Left colon (tissue), 2 donors: ENCODE measurements at regions of chr19 and their contacts with region 1.

Region 1: GRCh38 chr19:42529248-42529764 is 1.0 kb upstream of the CEACAM1 start:
- DNase-seq: peak; percentile 57 to 81
- ATAC-seq: peak; percentile 76

Region 2: DNA sequence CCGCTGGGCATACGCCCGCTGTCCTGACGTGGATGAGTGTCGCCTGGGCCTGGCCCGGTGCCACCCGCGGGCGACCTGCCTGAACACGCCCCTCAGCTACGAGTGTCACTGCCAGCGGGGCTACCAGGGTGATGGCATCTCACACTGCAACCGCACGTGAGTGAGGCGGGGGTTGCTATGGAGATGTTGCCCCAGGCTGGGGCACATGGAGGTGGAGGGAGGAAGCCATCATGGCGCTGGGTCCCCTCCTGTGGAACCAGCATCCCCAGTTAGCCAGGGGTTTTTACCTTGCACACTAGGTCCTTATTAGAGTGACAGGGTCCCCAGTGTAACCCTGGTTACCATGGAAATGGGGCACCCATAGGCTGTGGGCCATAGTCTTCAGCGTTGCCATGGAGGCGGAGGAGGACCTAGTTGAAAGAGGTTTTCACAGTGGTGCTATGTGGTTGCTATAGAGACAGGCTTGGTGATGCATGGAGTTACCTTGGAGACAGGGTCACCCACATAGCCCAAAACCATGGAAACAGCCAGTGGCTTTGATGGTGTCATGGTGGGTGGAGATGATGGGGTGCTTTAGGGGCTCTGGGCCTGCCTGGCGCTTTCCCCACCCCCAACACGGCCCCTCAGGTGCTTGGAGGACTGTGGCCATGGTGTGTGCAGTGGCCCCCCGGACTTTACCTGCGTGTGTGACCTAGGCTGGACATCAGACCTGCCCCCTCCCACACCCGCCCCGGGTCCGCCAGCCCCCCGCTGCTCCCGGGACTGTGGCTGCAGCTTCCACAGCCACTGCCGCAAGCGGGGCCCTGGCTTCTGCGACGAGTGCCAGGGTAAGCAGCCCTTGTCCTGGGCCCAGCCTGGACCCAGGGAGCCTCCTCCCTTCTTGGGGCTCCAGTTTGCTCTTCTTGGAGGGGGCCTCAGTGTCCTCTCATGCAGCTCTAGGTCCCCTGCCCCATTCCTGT is 176.7 kb before region 1 on chr19:
- intact Hi-C with region 1: no loop called
- DNase-seq: no peak
- ATAC-seq: no peak

Region 3: GRCh38 chr19:42450314-42450934 is 78.9 kb before region 1 on chr19:
- intact Hi-C with region 1: loop called (anchors 2 to 5 kb)
- DNase-seq: peak; percentile 86 to 92
- ATAC-seq: peak; percentile 96

Region 4: DNA sequence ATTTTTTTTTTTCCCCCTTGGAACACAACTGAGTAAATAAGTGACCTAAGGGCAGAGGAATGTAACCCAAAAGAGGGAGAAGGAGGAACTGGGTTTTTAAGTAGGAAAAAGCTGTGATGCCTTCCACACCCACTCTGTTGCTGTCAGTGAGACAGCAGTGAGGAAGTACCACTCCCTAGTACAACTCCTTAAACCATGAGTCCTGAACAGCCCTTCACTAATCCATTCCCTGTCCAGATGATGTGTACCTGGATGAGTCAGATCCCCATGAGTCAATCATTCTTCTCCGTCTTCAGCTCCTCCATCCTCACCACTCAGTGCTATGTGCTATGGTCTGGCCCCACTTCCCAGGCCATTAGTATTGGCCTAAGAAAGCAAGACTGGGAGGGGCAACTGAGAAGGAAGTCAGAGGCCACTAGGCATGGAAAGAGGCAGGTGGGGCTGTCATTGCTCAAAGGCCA is 73.7 kb before region 1 on chr19:
- intact Hi-C with region 1: loop called (anchors 2 to 5 kb)
- DNase-seq: peak; percentile 53 to 88
- ATAC-seq: peak; percentile 94